Naive thymus-derived CD8-positive, alpha-beta T cell (primary cell): ENCODE measurements at regions of chr1 and their contacts with region 1.

Region 1: DNA sequence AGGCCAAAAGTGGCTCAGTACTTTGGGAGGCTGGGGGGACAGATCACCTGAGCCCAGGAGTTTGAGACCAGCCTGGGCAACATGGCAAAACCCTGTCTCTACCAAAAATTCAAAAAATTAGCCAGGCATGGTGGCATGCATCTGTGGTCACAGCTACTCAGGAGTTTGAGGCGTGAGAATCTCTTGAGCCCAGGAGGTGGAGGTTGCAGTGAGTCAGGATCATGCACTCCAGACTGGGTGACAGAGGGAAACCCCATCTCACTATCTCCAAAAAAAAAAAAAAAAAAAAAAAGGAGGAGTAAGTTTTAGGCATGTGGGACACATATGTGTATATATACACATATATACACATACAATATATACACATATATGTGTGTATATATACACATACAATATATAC is 165.3 kb upstream of the DPYD start:
- DNase-seq: no peak
- ATAC-seq: no peak
- H3K4me3 Mint-ChIP-seq: no peak overlapping the region
- H3K27ac Mint-ChIP-seq: no peak overlapping the region
- H3K4me1 Mint-ChIP-seq: no peaks in the 10 kb centered on the region
- H3K27me3 Mint-ChIP-seq: peaks cover 0 to 14% (median 2%) of the 10 kb centered on the region in 5 donors

Region 2: DNA sequence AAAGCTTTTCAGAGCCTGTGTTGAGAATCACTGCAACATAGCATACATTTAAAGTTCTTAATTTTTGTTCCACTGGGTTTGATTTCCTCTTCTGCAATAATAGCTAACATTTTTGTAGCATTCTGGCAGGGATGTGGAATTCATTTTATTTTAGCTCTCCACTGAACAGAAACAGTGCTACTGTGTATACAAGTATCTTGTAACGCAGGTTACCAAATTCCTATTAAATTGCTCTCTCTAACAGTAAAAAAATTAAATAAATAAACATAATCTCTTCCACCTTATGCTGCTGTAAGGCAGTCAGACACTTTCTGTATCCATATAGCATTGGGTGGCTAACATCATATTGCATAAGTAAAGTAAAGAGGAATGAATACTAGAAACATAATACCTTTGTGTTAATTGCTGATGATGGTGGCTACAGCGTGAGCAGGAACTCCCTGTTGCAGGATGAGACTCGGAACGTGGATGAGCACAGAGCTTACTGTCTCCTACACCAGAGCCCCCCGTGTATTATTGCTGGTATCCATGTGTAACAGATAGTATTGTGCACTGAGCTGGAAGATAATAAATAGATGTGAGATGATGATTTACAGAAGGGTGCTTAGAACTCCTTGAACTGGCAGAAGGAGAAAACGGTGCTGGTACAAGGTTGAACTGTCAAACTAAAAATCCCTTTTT is 298.4 kb after region 1 on chr1:
- POLR2A ChIA-PET with region 1: interaction called, 10 read pairs
- DNase-seq: no peak
- ATAC-seq: no peak
- H3K4me3 Mint-ChIP-seq: no peak overlapping the region
- H3K27ac Mint-ChIP-seq: no peak overlapping the region
- H3K4me1 Mint-ChIP-seq: peaks cover 4 to 21% (median 10%) of the 10 kb centered on the region in 4 donors
- H3K27me3 Mint-ChIP-seq: no peaks in the 10 kb centered on the region